ENCODE measurements at regions of chr18 and their contacts with region 1.

Region 1: GRCh38 chr18:23703057-23703986 is 14.1 kb downstream of the LAMA3 start:
- DNase-seq: peak; percentile 67
- H3K4me3 ChIP-seq: no peak overlapping the region
- H3K27ac ChIP-seq: no peak overlapping the region
- H3K4me1 ChIP-seq: peaks cover 0 to 2% of the 10 kb centered on the region in 2 experiments; a peak in 1 of 4 replicates
- H3K27me3 ChIP-seq: no peaks in the 10 kb centered on the region
- CTCF ChIP-seq: peak; percentile 70
- EP300 ChIP-seq: no peak
- RAD21 ChIP-seq: peak; percentile 98

Region 2: GRCh38 chr18:23437357-23438045 is 265.8 kb before region 1 on chr18:
- CTCF ChIA-PET with region 1: no interaction called
- POLR2A ChIA-PET with region 1: no interaction called
- DNase-seq: peak; percentile 90
- H3K4me3 ChIP-seq: peak overlapping the region; percentile 76 to 91
- H3K27ac ChIP-seq: peak overlapping the region; percentile 39 to 41
- H3K4me1 ChIP-seq: peaks cover 0 to 9% of the 10 kb centered on the region in 2 experiments; a peak in 1 of 4 replicates
- H3K27me3 ChIP-seq: no peaks in the 10 kb centered on the region
- CTCF ChIP-seq: no peak
- EP300 ChIP-seq: no peak
- RAD21 ChIP-seq: no peak

Region 3: DNA sequence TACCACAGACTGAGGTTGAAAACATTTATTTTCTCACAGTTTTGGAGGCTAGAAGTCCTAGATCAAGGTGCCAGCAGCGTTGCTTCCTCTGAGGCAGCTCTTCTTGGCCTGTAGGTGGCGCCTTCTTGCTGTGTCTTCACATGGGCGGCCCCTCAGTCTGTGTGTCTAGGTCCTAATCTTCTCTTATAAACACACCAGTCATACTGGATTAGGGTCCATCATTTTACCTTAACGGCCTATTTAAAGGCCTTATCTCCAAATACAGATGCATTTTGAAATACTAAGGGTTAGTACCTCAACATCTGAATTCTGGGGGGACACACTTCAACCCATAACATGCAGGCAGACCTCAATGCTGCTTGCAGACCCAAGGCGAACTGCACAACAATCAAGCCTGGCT is 204.4 kb before region 1 on chr18:
- CTCF ChIA-PET with region 1: interaction called, 22 read pairs
- POLR2A ChIA-PET with region 1: no interaction called
- DNase-seq: peak; percentile 68
- H3K4me3 ChIP-seq: peak overlapping the region in 1 of 2 experiments; percentile 33; a peak in 1 of 4 replicates
- H3K27ac ChIP-seq: no peak overlapping the region
- H3K4me1 ChIP-seq: peaks cover 0 to 4% of the 10 kb centered on the region in 2 experiments; a peak in 1 of 4 replicates
- H3K27me3 ChIP-seq: no peaks in the 10 kb centered on the region
- CTCF ChIP-seq: peak; percentile 93
- EP300 ChIP-seq: no peak
- RAD21 ChIP-seq: peak; percentile 78

Region 4: DNA sequence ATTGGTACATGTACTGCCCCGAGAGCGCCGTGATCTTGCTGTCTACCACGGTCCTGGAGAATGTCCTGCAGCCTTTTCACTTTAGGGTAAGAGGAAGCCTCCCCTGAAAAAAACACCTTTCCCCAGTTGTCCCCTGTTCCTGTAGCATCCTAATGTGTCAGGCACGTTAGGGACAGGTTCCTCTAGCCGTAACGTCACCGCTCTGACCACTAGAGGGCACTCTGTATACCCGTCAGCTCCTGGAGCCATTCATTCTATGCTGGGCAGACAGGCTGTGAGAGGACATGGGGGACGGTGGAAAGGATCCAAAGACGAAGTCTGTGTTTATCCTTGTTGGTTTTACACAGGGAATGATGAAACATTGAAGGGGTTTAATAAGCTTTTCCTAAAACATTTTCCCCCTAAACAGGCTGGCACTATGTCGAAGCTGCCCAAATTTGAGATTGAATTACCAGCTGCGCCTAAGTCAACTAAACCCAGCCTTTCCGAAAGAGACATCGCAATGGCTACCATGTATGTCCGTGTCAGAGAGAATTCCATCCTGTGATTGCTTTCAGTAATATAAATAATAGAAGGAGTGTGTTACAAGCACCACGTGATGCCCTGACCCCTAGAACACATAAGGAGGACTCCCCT is 187.3 kb before region 1 on chr18:
- CTCF ChIA-PET with region 1: interaction called, 30 read pairs
- POLR2A ChIA-PET with region 1: no interaction called
- DNase-seq: peak; percentile 81
- H3K4me3 ChIP-seq: no peak overlapping the region
- H3K27ac ChIP-seq: no peak overlapping the region
- H3K4me1 ChIP-seq: no peaks in the 10 kb centered on the region
- H3K27me3 ChIP-seq: no peaks in the 10 kb centered on the region
- CTCF ChIP-seq: peak; percentile 93
- EP300 ChIP-seq: no peak
- RAD21 ChIP-seq: peak; percentile 79

Region 5: GRCh38 chr18:23586249-23587196 is 116.8 kb before region 1 on chr18 and contains the start of gene NPC1:
- CTCF ChIA-PET with region 1: interaction called, 13 read pairs
- POLR2A ChIA-PET with region 1: no interaction called
- DNase-seq: peak; percentile 96
- H3K4me3 ChIP-seq: peak within 1 kb of the TSS; percentile 81 to 83
- H3K27ac ChIP-seq: peak within 1 kb of the TSS; percentile 91 to 99
- H3K4me1 ChIP-seq: peaks cover 0 to 9% of the 10 kb centered on the region in 2 experiments; a peak in 1 of 4 replicates
- H3K27me3 ChIP-seq: no peaks in the 10 kb centered on the region
- CTCF ChIP-seq: peak; percentile 73
- EP300 ChIP-seq: no peak
- RAD21 ChIP-seq: peak; percentile 71
- polyA plus RNA-seq, gene NPC1: 23.9 and 30.7 TPM in 2 replicates

Region 6: DNA sequence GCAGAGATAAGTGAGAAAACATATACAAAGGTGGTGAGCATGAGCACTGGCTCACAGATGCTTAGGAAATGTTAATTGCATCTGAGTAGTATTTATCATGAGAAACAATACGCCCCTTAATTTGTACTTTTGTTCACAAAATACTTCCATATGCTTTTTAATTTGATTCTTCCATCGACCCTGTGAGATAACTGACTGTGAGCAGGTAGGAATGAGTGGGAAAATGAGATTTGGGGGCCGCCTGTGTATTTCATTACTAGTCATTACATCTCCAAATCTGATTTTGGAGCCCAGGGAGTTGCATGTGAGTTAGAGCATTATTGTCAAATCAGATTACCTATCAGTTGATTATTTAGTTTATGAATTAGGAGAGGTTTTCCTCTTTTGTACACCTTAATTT is 80.3 kb before region 1 on chr18:
- CTCF ChIA-PET with region 1: interaction called, 95 read pairs
- POLR2A ChIA-PET with region 1: interaction called, 4 read pairs
- DNase-seq: peak; percentile 70
- H3K4me3 ChIP-seq: no peak overlapping the region
- H3K27ac ChIP-seq: no peak overlapping the region
- H3K4me1 ChIP-seq: peaks cover 11 to 19% of the 10 kb centered on the region in 2 experiments; a peak in 3 of 4 replicates
- H3K27me3 ChIP-seq: no peaks in the 10 kb centered on the region
- CTCF ChIP-seq: no peak
- EP300 ChIP-seq: peak in 1 of 2 experiments; percentile 88; a peak in 2 of 4 replicates
- RAD21 ChIP-seq: no peak

Region 7: GRCh38 chr18:23689031-23689615 is 14.2 kb before region 1 on chr18 and contains the start of gene LAMA3:
- CTCF ChIA-PET with region 1: interaction called, 38 read pairs
- POLR2A ChIA-PET with region 1: no interaction called
- DNase-seq: peak; percentile 81
- H3K4me3 ChIP-seq: peak within 1 kb of the TSS; percentile 60 to 64
- H3K27ac ChIP-seq: no peak within 1 kb of the TSS
- H3K4me1 ChIP-seq: peaks cover 3 to 13% of the 10 kb centered on the region in 2 experiments; a peak in 2 of 4 replicates
- H3K27me3 ChIP-seq: no peaks in the 10 kb centered on the region
- CTCF ChIP-seq: peak; percentile 27; the same call in 1 of the 2 replicates
- EP300 ChIP-seq: no peak
- RAD21 ChIP-seq: peak; percentile 37
- polyA plus RNA-seq, gene LAMA3: 3.5 and 3.8 TPM in 2 replicates

Region 8: GRCh38 chr18:23812546-23813440 is 109.5 kb after region 1 on chr18:
- CTCF ChIA-PET with region 1: interaction called, 16 read pairs
- POLR2A ChIA-PET with region 1: no interaction called
- DNase-seq: peak; percentile 34
- H3K4me3 ChIP-seq: no peak overlapping the region
- H3K27ac ChIP-seq: no peak overlapping the region
- H3K4me1 ChIP-seq: peaks cover 0 to 6% of the 10 kb centered on the region in 2 experiments; a peak in 2 of 4 replicates
- H3K27me3 ChIP-seq: no peaks in the 10 kb centered on the region
- CTCF ChIP-seq: peak; percentile 77
- EP300 ChIP-seq: no peak
- RAD21 ChIP-seq: peak; percentile 76